Upper lobe of right lung (tissue), 1 donor: ENCODE measurements at regions of chr4 and their contacts with region 1.

Region 1: GRCh38 chr4:84750253-84750959 is 167.5 kb downstream of the CDS1 start:
- DNase-seq: no peak
- ATAC-seq: peak; percentile 72
- H3K4me3 ChIP-seq: no peak overlapping the region
- H3K27ac ChIP-seq: no peak overlapping the region
- H3K4me1 ChIP-seq: peaks cover 5% of the 10 kb centered on the region
- H3K27me3 ChIP-seq: no peaks in the 10 kb centered on the region
- CTCF ChIP-seq: peak; percentile 67

Region 2: DNA sequence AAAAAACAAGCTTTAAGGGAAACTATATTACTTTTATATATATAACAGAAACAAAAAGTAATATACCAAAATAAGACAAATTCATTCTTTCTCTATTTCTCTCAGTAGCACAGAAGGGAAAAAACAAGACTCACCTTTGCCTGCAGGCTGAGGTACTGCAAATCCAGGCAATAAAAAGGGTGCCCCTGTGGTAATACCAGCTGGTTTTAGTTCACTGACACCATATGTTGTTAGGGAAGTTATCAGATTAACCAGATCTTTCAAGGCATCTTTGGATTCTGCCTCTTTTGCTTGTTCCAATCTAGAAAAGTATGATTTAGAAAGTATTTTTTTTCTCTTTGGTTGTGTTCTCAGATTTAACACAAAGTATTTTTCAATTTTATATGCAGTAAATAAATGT is 76.3 kb after region 1 on chr4:
- intact Hi-C with region 1: no loop called
- DNase-seq: no peak
- ATAC-seq: no peak
- H3K4me3 ChIP-seq: no peak overlapping the region
- H3K27ac ChIP-seq: no peak overlapping the region
- H3K4me1 ChIP-seq: no peaks in the 10 kb centered on the region
- H3K27me3 ChIP-seq: no peaks in the 10 kb centered on the region
- CTCF ChIP-seq: no peak

Region 3: GRCh38 chr4:84971319-84971932 is 221.0 kb after region 1 on chr4:
- intact Hi-C with region 1: loop called (anchors 5 kb)
- DNase-seq: no peak
- ATAC-seq: peak; percentile 32
- H3K4me3 ChIP-seq: no peak overlapping the region
- H3K27ac ChIP-seq: no peak overlapping the region
- H3K4me1 ChIP-seq: no peaks in the 10 kb centered on the region
- H3K27me3 ChIP-seq: no peaks in the 10 kb centered on the region
- CTCF ChIP-seq: peak; percentile 69

Region 4: DNA sequence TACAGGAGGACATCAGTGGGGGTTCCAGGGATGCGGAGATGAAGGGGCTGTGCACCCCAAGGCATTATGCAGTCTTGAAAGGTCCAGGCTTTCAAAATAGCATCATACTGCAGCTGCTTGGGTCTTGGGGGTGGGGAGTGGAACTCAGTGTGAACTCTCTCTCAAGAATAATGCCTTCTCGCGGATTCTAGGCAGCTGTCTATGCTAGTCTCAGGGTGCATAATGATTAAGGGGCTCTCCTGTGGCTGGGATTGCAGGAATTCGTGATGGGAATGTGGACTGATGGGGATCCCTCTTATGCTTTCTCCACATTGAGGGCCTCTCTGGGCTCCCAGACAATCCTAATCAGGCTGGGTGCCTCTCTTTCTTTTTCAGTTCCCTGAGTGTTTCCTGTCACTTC is 552.4 kb after region 1 on chr4:
- intact Hi-C with region 1: no loop called
- DNase-seq: no peak
- ATAC-seq: no peak
- H3K4me3 ChIP-seq: no peak overlapping the region
- H3K27ac ChIP-seq: no peak overlapping the region
- H3K4me1 ChIP-seq: no peaks in the 10 kb centered on the region
- H3K27me3 ChIP-seq: no peaks in the 10 kb centered on the region
- CTCF ChIP-seq: no peak